Activated T-helper 2 cell treated with anti-CD3 and anti-CD28 coated beads, Interferon-gamma antibody, Interleukin-2, Interleukin-4, amounts not matched to agents 10 μg/mL and 5 μg/mL and 100 μg/mL, durations not matched to agents 14 hours and 24 hours and 36 hours (primary cell): ENCODE measurements at regions of chr1 and their contacts with region 1.

Region 1: GRCh38 chr1:239951511-239952140 is 140.1 kb upstream of the FMN2 start:
- DNase-seq: no peak
- H3K4me3 Mint-ChIP-seq: no peak overlapping the region
- H3K27ac Mint-ChIP-seq: no peak overlapping the region
- H3K4me1 Mint-ChIP-seq: no peaks in the 10 kb centered on the region
- H3K27me3 Mint-ChIP-seq: no peaks in the 10 kb centered on the region

Region 2: DNA sequence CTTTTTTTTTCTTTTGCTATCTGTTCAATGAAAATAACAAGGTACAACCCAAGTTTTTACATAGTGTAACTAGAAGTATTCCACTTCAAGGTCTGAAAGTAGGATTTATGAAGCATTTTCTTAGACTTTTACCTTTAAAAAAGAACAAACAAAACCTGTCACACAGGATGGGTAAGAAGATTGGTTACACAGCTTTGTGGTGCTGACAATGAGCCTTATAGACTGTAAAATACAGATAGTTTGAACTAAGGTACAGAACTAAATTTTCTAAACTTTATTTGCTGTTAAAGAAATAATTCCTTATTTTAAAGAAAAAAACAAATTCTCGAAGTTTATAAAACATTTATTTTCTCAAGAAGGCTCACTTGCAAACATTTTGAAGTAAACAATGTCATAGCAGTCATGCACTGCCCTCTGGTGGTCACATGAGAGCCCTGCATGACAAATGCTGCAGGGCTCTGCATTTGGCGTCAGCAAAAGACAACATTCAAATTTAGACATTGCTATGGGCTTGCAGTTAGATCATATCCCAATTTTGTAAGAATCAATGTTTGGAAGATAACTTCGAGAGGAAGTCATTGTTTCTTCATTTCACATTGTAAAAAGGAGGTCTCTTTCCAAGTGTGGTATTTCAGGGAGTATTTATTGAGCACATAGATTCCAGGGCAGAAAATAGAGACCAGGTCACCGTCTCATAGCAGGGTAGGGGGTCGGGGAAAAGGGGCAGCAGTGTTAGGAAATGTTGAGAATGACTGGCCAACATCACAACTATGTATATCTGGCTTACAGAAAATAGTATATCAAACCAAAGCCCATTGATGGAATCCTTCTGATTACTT is 24.7 kb after region 1 on chr1:
- intact Hi-C with region 1: loop called (anchors 1 kb)
- DNase-seq: no peak
- H3K4me3 Mint-ChIP-seq: no peak overlapping the region
- H3K27ac Mint-ChIP-seq: no peak overlapping the region
- H3K4me1 Mint-ChIP-seq: no peaks in the 10 kb centered on the region
- H3K27me3 Mint-ChIP-seq: no peaks in the 10 kb centered on the region